ENCODE measurements at regions of chr17 and their contacts with region 1.

Region 1: DNA sequence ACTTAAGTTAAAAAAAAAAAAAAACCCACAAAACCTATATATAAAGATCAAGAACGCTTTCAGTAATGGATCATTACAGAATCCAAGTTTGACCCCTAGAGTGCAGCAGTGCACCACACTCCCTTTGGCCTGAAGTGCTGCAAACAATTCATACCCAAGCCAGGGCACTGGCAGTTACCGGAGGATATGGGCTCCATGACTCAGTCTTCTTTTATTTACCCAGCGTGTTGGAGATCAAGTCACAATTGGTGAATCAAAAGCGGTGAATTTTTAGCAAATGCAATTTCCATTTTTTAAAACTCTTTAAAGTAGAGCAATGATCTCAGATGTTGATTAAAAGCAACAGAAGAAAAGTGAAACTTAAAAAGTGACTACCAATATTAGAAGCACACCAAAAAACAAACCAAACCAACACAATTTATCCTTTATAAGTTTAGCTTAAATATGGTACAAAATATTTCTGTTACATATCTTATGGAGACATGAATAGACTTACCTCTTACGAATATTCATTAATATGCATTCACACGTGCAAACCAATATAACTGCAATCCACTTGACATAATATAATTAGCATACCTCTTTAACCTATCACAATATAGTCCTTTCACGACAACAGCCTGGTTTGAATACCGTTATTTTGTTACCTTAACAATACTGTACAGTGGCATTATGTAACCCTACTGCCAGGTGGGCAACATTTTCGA is 46.3 kb downstream of the ZNF652 start:
- DNase-seq: peak; percentile 40 to 95 (median 76)

Region 2: GRCh38 chr17:48322060-48322459 is 993.6 kb before region 1 on chr17:
- intact Hi-C with region 1: no loop called
- DNase-seq: no peak

Region 3: DNA sequence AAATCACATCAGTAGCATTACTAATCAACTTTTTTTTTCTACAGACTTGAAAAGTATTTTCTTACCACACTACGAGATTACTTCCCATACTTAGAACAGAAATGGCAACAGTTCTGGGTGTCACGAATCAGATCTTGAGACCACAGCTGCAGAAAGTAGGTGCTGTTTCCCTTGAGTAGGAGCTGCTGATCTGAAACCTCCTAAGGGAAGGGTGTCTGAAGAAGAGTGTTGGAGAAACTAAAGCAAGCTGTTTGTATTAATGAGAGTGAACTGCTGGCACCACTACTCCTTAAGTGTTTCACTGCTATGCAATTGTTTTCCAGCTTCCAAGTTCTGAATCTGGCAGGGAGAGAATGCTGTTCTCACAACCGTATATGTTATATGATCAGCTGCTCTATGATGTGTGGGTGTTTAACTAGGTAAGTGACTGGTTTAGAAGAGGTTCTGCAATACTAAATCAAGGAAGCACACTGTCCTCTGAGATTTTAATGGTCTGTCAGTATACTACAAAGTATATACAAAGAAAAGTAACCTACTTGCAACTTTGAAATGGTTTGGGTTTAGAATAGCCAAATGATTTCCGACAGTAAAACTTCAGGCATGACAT is 43.0 kb after region 1 on chr17:
- intact Hi-C with region 1: loop called (anchors 5 kb)
- DNase-seq: no peak

Region 4: GRCh38 chr17:49390548-49391324 is 75.0 kb after region 1 on chr17:
- intact Hi-C with region 1: loop called (anchors 1 kb)
- DNase-seq: peak in 2 of 10 donors; percentile 42 to 80

Region 5: DNA sequence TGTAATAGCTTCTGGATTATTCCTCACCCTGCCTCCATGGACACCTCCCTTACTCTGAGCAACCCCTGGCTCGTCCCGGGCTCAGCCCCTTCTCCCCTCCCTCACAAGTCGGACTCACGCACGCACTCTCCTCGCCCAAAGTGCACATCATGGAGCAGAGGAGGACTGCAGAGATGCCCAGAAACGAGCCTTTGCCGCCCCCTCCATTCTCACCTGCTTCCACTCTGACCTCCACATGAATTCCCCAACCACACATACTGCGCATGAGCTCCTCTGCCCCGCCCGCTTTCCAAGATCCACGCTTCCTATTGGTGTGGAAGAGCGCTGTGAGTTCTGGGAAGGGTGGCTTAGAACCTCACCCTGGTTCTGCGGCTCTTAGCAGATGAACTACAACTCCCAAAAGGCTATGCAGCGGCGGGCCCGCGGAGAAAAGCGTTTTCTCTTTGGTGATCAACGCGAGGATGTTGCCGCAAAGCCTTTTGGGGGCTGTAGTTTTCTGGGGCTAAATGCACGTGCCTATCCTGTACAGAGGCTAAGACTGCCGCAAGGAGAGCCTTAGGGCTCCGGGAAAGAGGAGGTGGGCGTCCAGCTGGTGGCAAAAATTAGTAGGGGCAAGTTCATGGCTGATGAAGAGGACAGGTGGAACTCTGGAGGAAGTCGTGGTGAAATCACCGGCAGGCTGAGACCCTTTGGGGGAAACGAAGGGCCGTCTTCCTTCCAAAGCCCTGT is 99.1 kb after region 1 on chr17 and contains the start of gene PHB1:
- intact Hi-C with region 1: no loop called
- DNase-seq: peak; percentile 94 to 100 (median 97)

Measured in posterior cingulate gyrus (tissue), 11 donors.